SK-N-SH (cell line): ENCODE measurements at regions of chr5 and their contacts with region 1.

Region 1: DNA sequence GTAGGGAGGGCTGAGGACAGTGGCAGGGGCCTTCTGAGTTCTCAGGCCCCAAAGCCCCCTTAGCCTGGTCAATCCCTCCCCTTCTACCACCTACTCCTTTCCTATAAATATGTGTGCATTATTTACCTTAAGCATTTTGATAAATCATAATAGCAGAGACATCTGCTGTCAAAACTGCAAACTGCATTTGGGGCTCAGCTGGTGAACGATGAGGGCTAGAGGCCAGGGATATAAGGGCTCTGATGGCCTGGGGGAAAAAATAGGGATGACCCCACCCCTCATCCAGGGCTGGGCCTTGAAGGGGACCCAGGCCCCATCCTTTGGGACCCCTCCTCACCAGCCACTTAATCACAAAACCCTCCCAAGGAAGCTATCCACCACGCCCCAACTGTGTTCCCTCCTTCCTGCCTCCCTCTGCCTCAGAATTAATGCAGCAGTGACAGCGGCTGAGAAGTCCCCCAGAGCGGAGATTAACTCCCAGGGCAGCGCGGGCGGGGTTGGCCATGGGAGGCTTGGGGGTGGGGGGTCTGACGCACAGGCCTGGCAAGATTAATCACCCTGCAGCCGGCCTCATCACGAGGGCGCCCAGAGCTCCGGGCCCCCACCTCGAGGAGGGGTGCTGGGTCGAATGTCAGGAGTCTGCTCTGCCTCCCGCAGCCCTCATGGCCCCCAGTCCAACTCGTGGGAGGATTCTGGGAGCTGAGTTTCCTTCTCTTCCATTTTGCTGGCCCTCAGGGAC is 42.1 kb downstream of the CXXC5 start:
- DNase-seq: peak; percentile 77
- H3K4me3 ChIP-seq: no peak overlapping the region
- H3K27ac ChIP-seq: peak overlapping the region; percentile 71 to 97
- H3K4me1 ChIP-seq: peaks cover 41 to 75% of the 10 kb centered on the region in 2 experiments
- H3K27me3 ChIP-seq: no peaks in the 10 kb centered on the region
- CTCF ChIP-seq: peak; percentile 64
- EP300 ChIP-seq: peak in 1 of 2 experiments; percentile 61; a peak in 1 of 4 replicates
- RAD21 ChIP-seq: peak; percentile 76

Region 2: GRCh38 chr5:139543423-139543991 is 146.7 kb before region 1 on chr5:
- CTCF ChIA-PET with region 1: no interaction called
- POLR2A ChIA-PET with region 1: no interaction called
- DNase-seq: peak; percentile 59
- H3K4me3 ChIP-seq: no peak overlapping the region
- H3K27ac ChIP-seq: no peak overlapping the region
- H3K4me1 ChIP-seq: no peaks in the 10 kb centered on the region
- H3K27me3 ChIP-seq: no peaks in the 10 kb centered on the region
- CTCF ChIP-seq: no peak
- EP300 ChIP-seq: no peak
- RAD21 ChIP-seq: no peak

Region 3: DNA sequence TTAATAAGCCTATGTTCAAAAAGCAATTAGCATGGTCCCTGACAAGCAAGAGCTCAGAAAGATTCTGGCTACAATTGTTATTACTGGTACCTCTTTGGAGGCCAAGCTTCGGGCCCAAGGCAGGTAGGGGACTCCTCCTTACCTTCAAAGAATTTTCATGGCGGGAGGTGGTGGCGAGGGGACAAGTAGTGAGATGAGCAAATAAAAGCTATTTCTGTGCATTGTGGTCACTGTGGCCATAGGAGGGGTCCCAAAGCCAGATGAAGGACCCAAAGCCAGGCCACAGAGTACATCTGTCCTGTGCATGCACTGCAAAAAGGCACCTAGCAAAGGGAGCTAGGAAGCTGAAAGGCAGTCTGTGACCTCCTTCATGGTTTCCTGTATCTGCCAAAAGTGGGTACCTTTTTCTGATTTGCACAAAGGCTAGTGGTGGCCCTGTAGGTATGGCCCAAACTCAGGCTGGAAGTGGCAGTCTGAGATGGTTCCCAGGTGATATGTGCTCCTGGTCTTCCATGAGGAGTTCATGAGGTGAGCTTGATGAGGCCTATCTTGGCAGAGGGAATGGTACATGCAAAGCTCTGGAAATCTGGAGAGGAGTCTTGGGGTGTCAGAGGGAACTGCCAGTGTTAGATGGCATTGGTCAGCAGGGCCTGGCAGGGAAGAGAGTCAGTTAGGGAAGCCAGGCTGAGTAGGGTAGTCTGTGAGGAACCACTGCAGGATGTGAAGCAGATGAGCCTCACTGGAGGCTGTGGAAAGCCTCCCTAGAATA is 45.4 kb before region 1 on chr5:
- CTCF ChIA-PET with region 1: interaction called, 310 read pairs
- POLR2A ChIA-PET with region 1: interaction called, 7 read pairs
- DNase-seq: peak; percentile 15
- H3K4me3 ChIP-seq: no peak overlapping the region
- H3K27ac ChIP-seq: no peak overlapping the region
- H3K4me1 ChIP-seq: peaks cover 3 to 39% of the 10 kb centered on the region in 2 experiments; a peak in 2 of 4 replicates
- H3K27me3 ChIP-seq: no peaks in the 10 kb centered on the region
- CTCF ChIP-seq: no peak
- EP300 ChIP-seq: no peak
- RAD21 ChIP-seq: no peak

Region 4: GRCh38 chr5:139651853-139652787 is 38.1 kb before region 1 on chr5:
- CTCF ChIA-PET with region 1: interaction called, 73 read pairs
- POLR2A ChIA-PET with region 1: interaction called, 7 read pairs
- DNase-seq: peak; percentile 89
- H3K4me3 ChIP-seq: peak overlapping the region; percentile 19 to 91; a peak in 3 of 4 replicates
- H3K27ac ChIP-seq: peak overlapping the region; percentile 78 to 96
- H3K4me1 ChIP-seq: peaks cover 54 to 66% of the 10 kb centered on the region in 2 experiments
- H3K27me3 ChIP-seq: no peaks in the 10 kb centered on the region
- CTCF ChIP-seq: no peak
- EP300 ChIP-seq: 0 out of 4 replicates have a peak, but pooled peaks of 1 of the 2 experiments have one; percentile 10
- RAD21 ChIP-seq: no peak

Region 5: GRCh38 chr5:139660923-139661814 is 29.1 kb before region 1 on chr5:
- CTCF ChIA-PET with region 1: interaction called, 32 read pairs
- POLR2A ChIA-PET with region 1: interaction called, 7 read pairs
- DNase-seq: peak; percentile 84
- H3K4me3 ChIP-seq: no peak overlapping the region
- H3K27ac ChIP-seq: peak overlapping the region; percentile 96 to 99
- H3K4me1 ChIP-seq: peaks cover 76 to 96% of the 10 kb centered on the region in 2 experiments
- H3K27me3 ChIP-seq: no peaks in the 10 kb centered on the region
- CTCF ChIP-seq: no peak
- EP300 ChIP-seq: peak in 1 of 2 experiments; percentile 69; a peak in 2 of 4 replicates
- RAD21 ChIP-seq: no peak

Region 6: DNA sequence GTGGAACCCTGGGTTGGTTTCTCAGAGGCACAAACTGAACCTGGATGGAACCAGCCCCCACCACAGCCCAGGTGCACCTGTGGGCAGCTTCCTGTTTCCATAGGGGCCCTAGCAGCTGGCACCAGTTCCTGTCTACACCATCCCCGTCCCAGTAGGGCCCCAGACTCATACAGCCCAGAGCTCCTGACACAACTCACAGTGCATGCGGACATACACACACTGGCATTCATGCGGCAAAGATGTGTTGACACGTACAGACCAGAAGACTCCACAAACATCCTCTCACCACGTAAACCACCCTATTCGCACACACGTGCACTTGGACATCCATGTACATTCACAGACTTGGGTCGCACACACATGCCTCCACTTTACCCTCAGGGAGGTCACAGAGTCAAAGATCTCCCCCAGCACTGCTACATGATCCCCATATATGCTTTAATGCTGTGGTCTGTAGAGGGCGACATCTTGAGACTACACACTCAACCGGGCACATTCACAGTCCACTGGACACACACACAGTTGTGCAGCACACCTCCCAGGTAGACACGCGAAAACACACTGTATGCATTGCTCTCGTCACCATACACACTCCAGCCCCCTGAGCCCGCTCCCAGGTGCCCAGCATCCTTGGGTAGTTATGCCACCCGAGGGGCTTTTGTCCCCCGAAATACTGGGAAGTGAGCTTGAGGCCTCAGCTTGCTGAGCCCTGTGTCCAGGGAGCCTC is 19.7 kb before region 1 on chr5:
- CTCF ChIA-PET with region 1: interaction called, 42 read pairs
- POLR2A ChIA-PET with region 1: no interaction called
- DNase-seq: peak; percentile 59
- H3K4me3 ChIP-seq: no peak overlapping the region
- H3K27ac ChIP-seq: peak overlapping the region; percentile 26 to 99; a peak in 3 of 4 replicates
- H3K4me1 ChIP-seq: peaks cover 56 to 92% of the 10 kb centered on the region in 2 experiments
- H3K27me3 ChIP-seq: no peaks in the 10 kb centered on the region
- CTCF ChIP-seq: peak; percentile 43
- EP300 ChIP-seq: no peak
- RAD21 ChIP-seq: peak; percentile 32; the same call in 1 of the 2 replicates

Region 7: GRCh38 chr5:139678751-139679750 is 11.2 kb before region 1 on chr5:
- CTCF ChIA-PET with region 1: interaction called, 42 read pairs
- POLR2A ChIA-PET with region 1: interaction called, 23 read pairs
- DNase-seq: peak; percentile 56
- H3K4me3 ChIP-seq: no peak overlapping the region
- H3K27ac ChIP-seq: peak overlapping the region; percentile 54 to 99; a peak in 3 of 4 replicates
- H3K4me1 ChIP-seq: peaks cover 27 to 50% of the 10 kb centered on the region in 2 experiments; a peak in 3 of 4 replicates
- H3K27me3 ChIP-seq: no peaks in the 10 kb centered on the region
- CTCF ChIP-seq: no peak
- EP300 ChIP-seq: no peak
- RAD21 ChIP-seq: no peak

Region 8: GRCh38 chr5:139755892-139756671 is 65.8 kb after region 1 on chr5:
- CTCF ChIA-PET with region 1: interaction called, 12 read pairs
- POLR2A ChIA-PET with region 1: no interaction called
- DNase-seq: peak; percentile 70
- H3K4me3 ChIP-seq: no peak overlapping the region
- H3K27ac ChIP-seq: no peak overlapping the region
- H3K4me1 ChIP-seq: peaks cover 13 to 37% of the 10 kb centered on the region in 2 experiments; a peak in 3 of 4 replicates
- H3K27me3 ChIP-seq: no peaks in the 10 kb centered on the region
- CTCF ChIP-seq: no peak
- EP300 ChIP-seq: no peak
- RAD21 ChIP-seq: no peak